ENCODE measurements at regions of chr12 and their contacts with region 1.

Region 1: DNA sequence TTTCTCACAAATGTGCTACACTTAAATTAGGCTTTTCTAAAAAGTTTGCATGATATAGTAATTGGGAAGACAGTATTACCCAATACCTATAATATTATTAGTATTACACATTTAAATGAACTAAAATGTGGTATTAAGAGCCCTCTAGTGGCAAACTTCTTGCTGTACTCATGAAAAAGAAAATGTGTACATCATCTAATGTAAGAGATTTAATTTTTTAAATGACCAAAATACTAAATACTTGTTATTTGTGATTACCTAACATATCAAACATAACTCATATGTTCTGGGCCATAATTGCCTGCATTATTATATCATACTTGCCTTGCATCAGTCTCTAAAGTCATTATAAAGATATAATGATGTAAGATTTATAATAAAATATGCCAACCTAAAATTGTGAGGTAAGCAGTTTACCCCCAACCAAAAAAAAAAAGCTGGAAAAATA is 64.2 kb downstream of the DNAI7 start:
- DNase-seq: peak in 1 of 4 donors; percentile 30
- ATAC-seq: peak; percentile 51
- H3K4me3 ChIP-seq: no peak overlapping the region
- H3K27ac ChIP-seq: no peak overlapping the region
- H3K4me1 ChIP-seq: no peaks in the 10 kb centered on the region
- H3K27me3 ChIP-seq: no peaks in the 10 kb centered on the region
- CTCF ChIP-seq: peak; percentile 58 to 65

Region 2: GRCh38 chr12:24991209-24992049 is 139.3 kb before region 1 on chr12:
- intact Hi-C with region 1: loop called in 1 of 2 experiments (anchors 2 kb)
- DNase-seq: peak in 2 of 4 donors; percentile 39 to 60
- ATAC-seq: peak; percentile 96
- H3K4me3 ChIP-seq: no peak overlapping the region
- H3K27ac ChIP-seq: no peak overlapping the region
- H3K4me1 ChIP-seq: no peaks in the 10 kb centered on the region
- H3K27me3 ChIP-seq: no peaks in the 10 kb centered on the region
- CTCF ChIP-seq: peak; percentile 46 to 49